ENCODE measurements at regions of chr22 and their contacts with region 1.

Region 1: GRCh38 chr22:16917144-16918003 is 90.6 kb downstream of the GAB4 start:
- DNase-seq: peak; percentile 86
- H3K4me3 Mint-ChIP-seq: no peak overlapping the region
- H3K27ac Mint-ChIP-seq: no peak overlapping the region
- H3K4me1 Mint-ChIP-seq: peaks cover 5% of the 10 kb centered on the region
- H3K27me3 Mint-ChIP-seq: peaks cover 16% of the 10 kb centered on the region

Region 2: GRCh38 chr22:17057959-17058814 is 140.8 kb after region 1 on chr22:
- intact Hi-C with region 1: loop called (anchors 1 kb)
- DNase-seq: peak; percentile 85
- H3K4me3 Mint-ChIP-seq: no peak overlapping the region
- H3K27ac Mint-ChIP-seq: no peak overlapping the region
- H3K4me1 Mint-ChIP-seq: peaks cover 4% of the 10 kb centered on the region
- H3K27me3 Mint-ChIP-seq: peaks cover 6% of the 10 kb centered on the region

Measured in activated CD4-positive, alpha-beta T cell treated with anti-CD3 and anti-CD28 coated beads, Interleukin-2, amount 10 ng/mL, durations not matched to agents 24 days and 14 days (primary cell).